ENCODE measurements at regions of chr11 and their contacts with region 1.

Region 1: GRCh38 chr11:35305670-35306382 is 113.5 kb downstream of the SLC1A2 start:
- DNase-seq: peak; percentile 56
- H3K4me3 Mint-ChIP-seq: no peak overlapping the region
- H3K27ac Mint-ChIP-seq: no peak overlapping the region
- H3K4me1 Mint-ChIP-seq: peaks cover 15% of the 10 kb centered on the region
- H3K27me3 Mint-ChIP-seq: peaks cover 8% of the 10 kb centered on the region

Region 2: GRCh38 chr11:34926101-34926830 is 379.6 kb before region 1 on chr11:
- CTCF ChIA-PET with region 1: interaction called, 20 read pairs
- DNase-seq: no peak
- H3K4me3 Mint-ChIP-seq: no peak overlapping the region
- H3K27ac Mint-ChIP-seq: no peak overlapping the region
- H3K4me1 Mint-ChIP-seq: peaks cover 7% of the 10 kb centered on the region
- H3K27me3 Mint-ChIP-seq: no peaks in the 10 kb centered on the region

Region 3: GRCh38 chr11:35237860-35238715 is 67.7 kb before region 1 on chr11:
- CTCF ChIA-PET with region 1: interaction called, 19 read pairs
- DNase-seq: peak; percentile 58
- H3K4me3 Mint-ChIP-seq: no peak overlapping the region
- H3K27ac Mint-ChIP-seq: no peak overlapping the region
- H3K4me1 Mint-ChIP-seq: peaks cover 78% of the 10 kb centered on the region
- H3K27me3 Mint-ChIP-seq: peaks cover 14% of the 10 kb centered on the region

Region 4: DNA sequence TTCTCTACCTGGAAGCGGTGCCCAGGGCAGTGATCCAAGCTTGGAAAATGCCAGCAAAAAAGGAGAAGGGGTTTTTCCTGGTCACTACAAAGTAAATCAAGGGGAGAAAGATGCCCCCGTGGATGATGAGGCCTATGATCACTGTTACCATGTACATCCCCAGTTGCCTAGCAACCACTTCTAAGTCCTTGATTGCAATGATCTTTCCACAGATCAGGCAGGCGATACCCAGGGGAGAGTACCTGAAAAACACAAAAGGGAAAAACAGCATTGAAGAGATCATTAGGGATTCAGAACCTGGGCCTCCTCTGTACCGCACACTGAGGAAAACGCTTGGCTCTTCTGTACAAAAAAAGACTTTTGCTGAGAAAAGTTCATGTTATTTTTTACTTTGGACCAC is 13.5 kb before region 1 on chr11:
- CTCF ChIA-PET with region 1: interaction called, 25 read pairs
- DNase-seq: no peak
- H3K4me3 Mint-ChIP-seq: no peak overlapping the region
- H3K27ac Mint-ChIP-seq: no peak overlapping the region
- H3K4me1 Mint-ChIP-seq: peaks cover 12% of the 10 kb centered on the region
- H3K27me3 Mint-ChIP-seq: peaks cover 13% of the 10 kb centered on the region

Region 5: DNA sequence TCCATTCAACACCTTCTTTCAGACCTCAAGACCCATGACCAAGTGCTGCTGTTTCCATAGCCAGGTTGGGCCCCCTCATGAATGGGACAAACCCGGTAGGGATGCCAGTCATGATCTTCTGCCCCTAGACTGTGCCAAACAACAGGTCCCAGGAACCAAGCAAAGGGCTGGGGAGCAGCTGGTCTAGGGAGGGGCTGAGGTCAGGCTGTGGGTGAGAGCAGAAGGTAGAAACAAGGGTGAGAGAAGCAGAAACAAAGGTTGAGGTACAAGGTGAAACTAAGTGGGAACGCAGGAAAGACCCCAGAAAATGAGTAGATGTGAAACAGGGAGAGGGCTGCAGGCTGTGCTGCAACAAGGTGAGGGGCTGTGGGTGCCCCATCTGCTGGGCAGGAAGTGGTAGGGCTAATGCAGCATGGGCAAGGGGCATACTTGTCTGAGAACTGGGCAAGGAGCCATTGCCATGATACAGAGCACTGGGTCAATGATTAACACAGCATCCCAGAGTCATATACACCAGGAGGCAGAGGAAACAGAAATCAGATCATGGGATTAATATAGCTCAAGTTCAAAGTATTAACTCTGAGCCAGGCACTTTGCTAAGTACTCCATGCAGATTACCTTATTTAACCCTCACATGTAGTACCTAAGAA is 67.6 kb after region 1 on chr11:
- CTCF ChIA-PET with region 1: no interaction called
- DNase-seq: no peak
- H3K4me3 Mint-ChIP-seq: no peak overlapping the region
- H3K27ac Mint-ChIP-seq: no peak overlapping the region
- H3K4me1 Mint-ChIP-seq: peaks cover 4% of the 10 kb centered on the region
- H3K27me3 Mint-ChIP-seq: peaks cover 22% of the 10 kb centered on the region

Region 6: DNA sequence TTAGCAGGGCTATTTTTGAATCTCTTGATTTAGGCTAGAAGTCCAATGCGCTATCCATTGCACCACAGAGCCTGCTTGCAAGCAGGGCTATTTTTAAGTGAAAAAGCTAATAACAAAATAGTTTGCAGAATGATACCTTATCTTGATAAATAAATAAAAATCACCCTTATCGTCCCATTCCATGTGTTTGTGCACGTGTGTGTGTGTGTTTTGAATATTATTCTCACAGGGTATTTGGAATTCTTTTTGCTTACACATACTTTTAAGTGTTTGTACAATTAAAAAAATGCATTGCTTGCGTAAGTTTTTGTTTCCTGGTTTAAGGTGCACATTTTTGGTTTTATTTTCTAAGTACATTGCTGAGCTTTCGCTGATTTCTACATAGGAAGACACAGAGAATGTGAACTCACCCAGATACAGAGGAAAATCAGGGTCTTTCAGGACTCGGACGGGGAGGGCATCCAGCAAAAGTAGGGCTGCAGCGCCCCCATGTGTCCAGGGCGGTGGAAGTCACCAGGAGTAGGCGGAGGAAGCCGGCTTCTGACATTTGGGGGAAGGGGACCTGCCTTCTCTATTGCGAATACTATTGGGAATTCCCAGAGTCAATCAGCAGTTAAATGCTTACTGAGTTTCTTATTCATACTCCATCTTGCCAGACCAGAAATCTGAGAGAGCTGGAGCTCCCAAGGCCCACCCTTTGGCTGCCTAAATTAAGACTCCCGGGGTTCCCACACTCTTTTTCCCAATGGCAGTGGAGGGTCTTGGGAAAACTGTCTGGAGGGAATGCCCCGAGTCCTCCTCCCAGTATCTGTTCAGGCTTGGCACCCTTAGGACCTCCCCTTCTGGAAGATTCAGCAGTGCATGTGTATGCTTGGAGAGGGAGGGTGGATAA is 86.3 kb after region 1 on chr11:
- CTCF ChIA-PET with region 1: interaction called, 18 read pairs
- DNase-seq: peak; percentile 89
- H3K4me3 Mint-ChIP-seq: no peak overlapping the region
- H3K27ac Mint-ChIP-seq: no peak overlapping the region
- H3K4me1 Mint-ChIP-seq: peaks cover 26% of the 10 kb centered on the region
- H3K27me3 Mint-ChIP-seq: peaks cover 28% of the 10 kb centered on the region